B cell (primary cell): ENCODE measurements at regions of chr19 and their contacts with region 1.

Region 1: GRCh38 chr19:57675881-57676280 is 5.9 kb upstream of the ZNF551 start:
- DNase-seq: no peak
- ATAC-seq: no peak
- H3K4me3 ChIP-seq: no peak overlapping the region
- H3K4me3 Mint-ChIP-seq: no peak overlapping the region
- H3K27ac ChIP-seq: no peak overlapping the region
- H3K27ac Mint-ChIP-seq: no peak overlapping the region
- H3K4me1 ChIP-seq: no peaks in the 10 kb centered on the region
- H3K4me1 Mint-ChIP-seq: no peaks in the 10 kb centered on the region
- H3K27me3 ChIP-seq: peaks cover 0 to 4% (median 2%) of the 10 kb centered on the region in 4 experiments
- H3K27me3 Mint-ChIP-seq: peaks cover 37% of the 10 kb centered on the region
- CTCF ChIP-seq: no peak

Region 2: DNA sequence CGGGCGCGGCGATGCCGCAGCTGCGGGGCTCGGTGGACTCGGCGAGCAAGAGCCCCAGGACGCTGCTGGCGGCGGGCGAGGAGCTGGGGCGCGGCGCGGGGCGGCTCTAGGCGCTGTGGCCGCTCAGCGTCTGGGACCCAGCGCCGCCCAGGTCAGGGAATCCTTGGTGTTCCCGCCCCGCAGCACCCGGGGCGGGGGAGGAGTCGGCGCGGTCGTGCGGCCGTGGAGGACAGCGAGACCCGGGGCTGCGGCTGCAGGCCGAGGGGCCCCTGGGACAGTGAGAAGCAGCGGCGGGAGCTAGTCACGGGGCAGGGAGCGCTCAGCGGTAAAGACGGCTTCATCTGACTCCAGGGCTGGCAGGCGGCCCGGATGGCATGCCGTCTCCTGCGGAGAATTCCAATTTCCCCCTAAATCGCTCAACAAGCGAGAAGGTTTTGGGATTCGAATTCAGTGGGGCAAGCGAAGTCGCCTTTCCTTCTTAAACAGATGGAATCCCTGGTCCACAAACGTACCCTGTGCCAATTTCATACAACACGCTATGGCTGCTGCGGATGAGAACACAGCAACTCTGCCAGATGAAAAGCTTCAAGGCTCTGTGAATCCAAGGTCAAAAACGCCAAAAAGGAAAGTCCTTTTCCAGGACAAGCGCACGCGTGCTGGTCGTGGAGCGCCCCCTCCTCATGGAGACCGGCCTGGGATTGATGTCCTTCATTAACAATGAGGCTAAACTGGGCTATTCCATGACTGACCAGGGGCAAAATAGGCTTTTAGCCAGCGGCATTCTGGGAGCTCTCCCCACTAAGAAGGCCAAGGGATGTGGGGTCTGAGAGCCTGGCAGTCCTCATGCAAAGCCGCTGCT is 11.4 kb before region 1 on chr19:
- CTCF ChIA-PET with region 1: interaction called, 4 read pairs
- POLR2A ChIA-PET with region 1: interaction called, 11 read pairs
- intact Hi-C with region 1: no loop called
- DNase-seq: peak; percentile 51
- ATAC-seq: peak; percentile 45
- H3K4me3 ChIP-seq: peak overlapping the region in 4 of 5 experiments; percentile 4 to 64 (median 42)
- H3K4me3 Mint-ChIP-seq: peak overlapping the region; percentile 73
- H3K27ac ChIP-seq: no peak overlapping the region
- H3K27ac Mint-ChIP-seq: no peak overlapping the region
- H3K4me1 ChIP-seq: peaks cover 9 to 13% of the 10 kb centered on the region in 2 donors
- H3K4me1 Mint-ChIP-seq: peaks cover 13% of the 10 kb centered on the region
- H3K27me3 ChIP-seq: peaks cover 0 to 51% (median 16%) of the 10 kb centered on the region in 4 experiments
- H3K27me3 Mint-ChIP-seq: peaks cover 32% of the 10 kb centered on the region
- CTCF ChIP-seq: no peak

Region 3: DNA sequence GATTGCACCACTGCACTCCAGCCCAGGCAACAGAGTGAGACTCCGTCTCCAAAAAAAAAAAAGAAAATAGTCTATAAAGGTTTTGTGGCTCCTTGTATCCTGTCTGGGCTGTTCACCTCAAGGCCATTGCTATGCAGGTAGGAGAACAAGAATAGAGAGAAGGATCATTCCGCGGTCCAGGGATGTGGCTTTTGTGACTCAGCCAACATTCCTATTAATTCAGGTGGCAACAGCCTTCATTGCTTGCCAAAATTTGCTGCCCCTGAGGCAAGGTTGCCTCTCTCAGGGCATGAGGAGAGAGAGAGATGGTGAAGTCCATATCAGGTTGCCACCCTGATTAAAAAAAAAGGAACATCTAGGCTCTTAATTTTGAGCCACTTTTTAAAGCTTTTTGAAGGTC is 13.9 kb after region 1 on chr19:
- CTCF ChIA-PET with region 1: no interaction called
- POLR2A ChIA-PET with region 1: no interaction called
- intact Hi-C with region 1: no loop called
- DNase-seq: no peak
- ATAC-seq: no peak
- H3K4me3 ChIP-seq: no peak overlapping the region
- H3K4me3 Mint-ChIP-seq: no peak overlapping the region
- H3K27ac ChIP-seq: no peak overlapping the region
- H3K27ac Mint-ChIP-seq: no peak overlapping the region
- H3K4me1 ChIP-seq: no peaks in the 10 kb centered on the region
- H3K4me1 Mint-ChIP-seq: peaks cover 6% of the 10 kb centered on the region
- H3K27me3 ChIP-seq: no peaks in the 10 kb centered on the region
- H3K27me3 Mint-ChIP-seq: no peaks in the 10 kb centered on the region
- CTCF ChIP-seq: no peak

Region 4: GRCh38 chr19:57786291-57786690 is 110.4 kb after region 1 on chr19:
- CTCF ChIA-PET with region 1: no interaction called
- POLR2A ChIA-PET with region 1: no interaction called
- intact Hi-C with region 1: no loop called
- DNase-seq: no peak
- ATAC-seq: no peak
- H3K4me3 ChIP-seq: no peak overlapping the region
- H3K4me3 Mint-ChIP-seq: no peak overlapping the region
- H3K27ac ChIP-seq: no peak overlapping the region
- H3K27ac Mint-ChIP-seq: no peak overlapping the region
- H3K4me1 ChIP-seq: no peaks in the 10 kb centered on the region
- H3K4me1 Mint-ChIP-seq: peaks cover 9% of the 10 kb centered on the region
- H3K27me3 ChIP-seq: no peaks in the 10 kb centered on the region
- H3K27me3 Mint-ChIP-seq: no peaks in the 10 kb centered on the region
- CTCF ChIP-seq: no peak